ENCODE measurements at regions of chr20 and their contacts with region 1.

Region 1: DNA sequence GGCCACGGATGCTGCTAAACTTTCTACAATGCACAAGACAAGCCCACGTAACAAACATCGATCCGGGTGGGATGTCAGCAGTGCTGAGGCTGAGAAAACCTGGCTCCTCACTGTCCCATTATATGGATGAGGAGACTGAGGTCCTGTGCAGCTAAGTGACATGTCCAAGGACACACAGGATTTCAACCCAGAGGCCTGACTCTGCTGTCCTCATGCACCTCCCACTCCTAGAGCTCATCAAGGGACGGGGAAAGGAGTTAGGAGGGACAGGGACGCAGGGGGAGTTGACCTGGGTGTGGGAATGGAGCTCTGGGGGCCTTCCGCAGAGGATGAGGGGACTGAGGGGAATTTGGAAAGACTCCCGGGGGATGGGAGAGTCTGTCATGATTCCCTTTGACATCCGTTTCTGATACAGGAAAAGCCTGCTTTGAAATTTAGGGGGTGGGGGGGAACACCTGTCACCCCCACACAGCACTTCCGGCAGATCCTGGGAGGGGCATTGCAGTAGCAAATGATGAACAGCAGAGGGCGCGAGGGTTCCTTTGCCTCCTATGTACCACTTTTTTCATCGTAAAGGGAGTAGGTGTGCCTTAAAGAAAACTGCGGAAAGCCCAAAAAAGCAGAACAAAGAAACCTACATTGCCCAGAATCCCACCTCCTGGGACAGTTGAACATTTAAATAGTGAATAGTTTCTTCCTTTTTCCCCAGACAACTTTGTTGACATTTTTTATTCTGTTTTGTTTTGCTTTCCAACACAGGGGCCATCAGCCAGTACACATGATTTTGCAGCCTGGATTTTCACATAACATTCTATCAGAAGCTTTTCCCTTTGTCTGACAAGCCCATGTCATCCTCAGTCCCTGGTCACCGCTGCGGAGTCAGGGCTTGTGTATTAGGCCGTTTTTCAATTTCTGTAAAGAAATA is 48.6 kb downstream of the SLC2A10 start:
- DNase-seq: no peak
- H3K4me3 ChIP-seq: no peak overlapping the region
- H3K27me3 ChIP-seq: peaks cover 3% of the 10 kb centered on the region; the same call in 1 of the 2 replicates
- CTCF ChIP-seq: peak; percentile 97

Region 2: DNA sequence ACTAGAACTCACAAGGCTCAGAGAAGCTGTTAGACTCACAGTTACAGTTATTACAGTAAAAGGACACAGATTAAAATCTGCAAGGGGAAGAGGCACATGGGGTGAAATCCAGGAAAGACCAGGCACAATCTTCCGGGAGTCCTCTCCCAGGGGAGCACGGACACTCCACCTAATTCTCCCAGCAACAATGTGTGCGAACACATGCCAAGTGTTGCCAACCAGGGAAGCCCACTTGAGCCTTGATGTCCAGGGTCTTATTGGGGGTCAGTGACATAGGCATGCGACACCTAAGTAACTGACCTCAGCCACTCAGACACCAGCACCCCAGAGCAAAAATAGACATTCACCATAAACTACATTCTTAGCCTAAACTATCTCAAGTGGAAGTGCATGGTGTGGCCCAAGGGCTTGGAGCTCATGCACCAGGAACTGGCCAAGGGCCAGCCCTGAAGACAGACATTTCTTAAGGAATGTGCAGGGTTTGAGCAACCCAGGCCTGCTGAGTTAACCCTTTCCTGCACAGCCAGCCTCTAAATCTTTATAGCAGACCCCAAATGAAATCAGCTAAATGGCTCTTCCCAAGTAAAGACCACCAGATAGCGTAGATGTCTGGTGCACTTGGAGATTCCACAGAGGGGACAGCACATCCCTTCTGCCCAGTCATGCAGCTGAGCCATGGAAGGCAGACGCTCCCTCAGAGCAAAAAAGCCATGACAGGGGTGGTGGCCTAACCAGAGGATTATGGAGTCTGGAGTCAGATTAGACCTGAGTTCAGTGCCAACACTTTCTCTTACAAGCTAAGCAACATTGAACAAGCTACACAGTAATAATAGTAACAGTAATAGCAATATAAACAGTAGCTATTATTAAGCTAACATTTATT is 375.8 kb after region 1 on chr20:
- CTCF ChIA-PET with region 1: interaction called, 4 read pairs
- POLR2A ChIA-PET with region 1: interaction called, 13 read pairs
- DNase-seq: no peak
- H3K4me3 ChIP-seq: no peak overlapping the region
- H3K27me3 ChIP-seq: no peaks in the 10 kb centered on the region
- CTCF ChIP-seq: no peak

Region 3: GRCh38 chr20:47150403-47151152 is 392.6 kb after region 1 on chr20:
- CTCF ChIA-PET with region 1: interaction called, 38 read pairs
- POLR2A ChIA-PET with region 1: no interaction called
- DNase-seq: no peak
- H3K4me3 ChIP-seq: no peak overlapping the region
- H3K27me3 ChIP-seq: no peaks in the 10 kb centered on the region
- CTCF ChIP-seq: peak; percentile 69